AG04449 (cell line): ENCODE measurements at regions of chr9 and their contacts with region 1.

Region 1: DNA sequence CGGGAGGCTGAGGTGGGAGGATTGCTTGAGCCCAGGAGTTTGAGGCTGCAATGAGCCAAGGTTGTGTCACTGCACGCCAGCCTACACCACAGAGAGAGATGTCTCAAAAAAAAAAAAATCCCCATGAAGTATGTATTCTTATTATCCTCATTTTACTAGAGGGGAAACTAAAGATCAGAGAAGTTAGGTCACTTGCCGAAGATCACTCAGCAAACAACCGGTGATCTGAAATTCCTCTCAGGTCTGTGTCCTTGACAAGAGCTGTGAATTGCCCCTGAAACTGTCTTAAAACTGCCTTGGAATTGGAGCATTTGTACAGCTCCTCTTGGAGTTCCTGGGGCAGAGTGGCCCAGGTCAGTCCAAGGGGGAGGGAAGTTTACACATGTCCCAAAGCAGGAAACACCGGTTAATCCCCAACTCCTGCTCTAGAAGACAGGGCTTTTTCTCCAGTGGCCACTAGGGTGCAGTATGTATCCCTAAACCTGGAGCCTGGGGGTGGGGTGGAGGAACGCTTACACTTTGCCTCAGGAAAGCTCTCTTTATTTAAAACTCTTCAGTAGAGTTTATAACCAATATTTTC is 27.6 kb downstream of the AQP7 start:
- DNase-seq: peak; percentile 17
- H3K4me3 ChIP-seq: no peak overlapping the region
- CTCF ChIP-seq: peak; percentile 80

Region 2: DNA sequence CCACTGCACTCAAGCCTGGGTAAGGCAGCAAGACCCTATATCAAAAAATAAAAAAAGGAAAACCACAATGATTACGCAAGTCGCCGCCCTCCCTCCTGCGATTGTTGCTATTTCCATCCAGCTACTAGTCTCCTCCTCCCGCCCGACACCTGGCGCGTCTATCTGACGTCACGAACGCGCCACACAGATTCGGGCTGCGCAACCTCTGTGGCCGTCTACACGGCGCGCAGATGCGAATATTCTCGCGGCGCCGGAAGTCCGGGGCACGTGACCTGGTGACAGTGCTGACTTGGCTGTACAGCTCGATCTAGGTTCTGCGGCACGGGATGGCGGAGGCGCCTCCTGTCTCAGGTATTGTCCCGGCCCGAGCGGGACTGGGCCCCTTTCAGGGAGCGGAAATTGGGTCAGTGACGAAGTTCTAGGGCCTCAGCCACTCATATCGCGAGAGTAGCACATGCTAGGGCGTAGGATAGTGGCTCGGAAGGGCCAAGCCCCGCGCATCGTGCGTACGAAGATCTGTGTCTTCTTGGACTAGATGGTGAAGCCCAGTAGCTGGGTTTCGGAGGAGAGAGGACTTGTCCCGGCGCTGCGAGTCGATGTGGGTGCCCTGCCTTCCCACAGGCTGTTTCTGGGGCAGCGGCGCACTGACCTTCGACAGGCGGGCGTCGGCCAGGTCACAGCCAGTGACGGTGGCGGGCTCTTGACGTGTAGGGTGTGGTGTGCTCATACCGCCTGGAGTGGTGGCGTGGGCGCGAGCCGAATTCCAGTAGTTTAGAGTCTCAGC is 84.3 kb before region 1 on chr9 and contains the start of gene NFX1:
- CTCF ChIA-PET with region 1: interaction called, 13 read pairs
- POLR2A ChIA-PET with region 1: no interaction called
- DNase-seq: peak; percentile 92
- H3K4me3 ChIP-seq: peak within 1 kb of the TSS; percentile 97
- CTCF ChIP-seq: no peak

Region 3: DNA sequence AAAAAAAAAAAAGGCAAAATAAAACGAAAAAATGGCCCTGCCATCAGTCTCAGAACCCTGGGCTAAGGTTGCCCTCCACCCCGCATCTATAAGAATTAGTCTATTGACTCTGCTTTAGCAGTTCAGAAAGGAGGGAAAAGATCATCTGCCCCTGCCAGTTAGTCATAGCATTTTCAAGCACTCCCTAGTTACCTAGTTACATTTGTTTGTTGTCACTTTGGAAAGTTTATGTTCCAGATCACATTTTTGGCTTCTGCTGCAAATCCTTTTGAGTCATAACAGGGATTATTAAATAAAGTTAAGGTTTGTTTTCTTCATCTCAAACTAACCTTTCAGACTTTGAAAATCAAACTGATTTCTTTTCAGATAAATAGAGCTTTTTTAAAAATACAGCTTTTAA is 24.4 kb before region 1 on chr9:
- CTCF ChIA-PET with region 1: interaction called, 95 read pairs
- POLR2A ChIA-PET with region 1: no interaction called
- DNase-seq: peak; percentile 71
- H3K4me3 ChIP-seq: no peak overlapping the region
- CTCF ChIP-seq: no peak

Region 4: DNA sequence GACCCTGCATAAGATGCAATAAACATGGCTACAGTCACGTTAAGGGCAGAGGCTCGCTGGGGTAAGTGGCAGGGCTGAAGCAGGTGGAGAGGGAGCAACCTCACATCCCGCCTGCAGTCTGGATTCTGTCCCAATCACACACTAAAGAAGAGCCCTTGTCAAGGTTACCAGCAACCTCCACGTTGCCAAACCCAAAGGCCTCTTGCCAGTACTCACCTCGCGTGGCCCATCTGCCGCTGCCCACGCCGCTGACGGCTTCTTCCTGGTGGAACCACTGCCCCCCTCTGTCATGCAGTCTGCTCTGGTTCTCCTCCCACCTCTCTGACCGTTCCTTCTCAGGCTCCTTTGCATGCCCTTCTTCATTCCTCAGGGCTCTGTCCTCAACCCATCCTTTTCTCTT is 18.9 kb after region 1 on chr9:
- CTCF ChIA-PET with region 1: interaction called, 13 read pairs
- POLR2A ChIA-PET with region 1: no interaction called
- DNase-seq: no peak
- H3K4me3 ChIP-seq: no peak overlapping the region
- CTCF ChIP-seq: no peak

Region 5: GRCh38 chr9:33415501-33416038 is 40.8 kb after region 1 on chr9:
- CTCF ChIA-PET with region 1: interaction called, 51 read pairs
- POLR2A ChIA-PET with region 1: no interaction called
- DNase-seq: no peak
- H3K4me3 ChIP-seq: no peak overlapping the region
- CTCF ChIP-seq: peak; percentile 75

Region 6: GRCh38 chr9:33452828-33453271 is 78.1 kb after region 1 on chr9:
- CTCF ChIA-PET with region 1: interaction called, 24 read pairs
- POLR2A ChIA-PET with region 1: no interaction called
- DNase-seq: peak; percentile 42
- H3K4me3 ChIP-seq: no peak overlapping the region
- CTCF ChIP-seq: peak; percentile 83

Region 7: GRCh38 chr9:33473643-33474352 is 99.1 kb after region 1 on chr9 and contains the start of gene NOL6:
- CTCF ChIA-PET with region 1: interaction called, 89 read pairs
- POLR2A ChIA-PET with region 1: no interaction called
- DNase-seq: peak; percentile 94
- H3K4me3 ChIP-seq: peak within 1 kb of the TSS; percentile 93
- CTCF ChIP-seq: no peak